Pancreas (tissue), 10 donors: ENCODE measurements at regions of chr12 and their contacts with region 1.

Region 1: DNA sequence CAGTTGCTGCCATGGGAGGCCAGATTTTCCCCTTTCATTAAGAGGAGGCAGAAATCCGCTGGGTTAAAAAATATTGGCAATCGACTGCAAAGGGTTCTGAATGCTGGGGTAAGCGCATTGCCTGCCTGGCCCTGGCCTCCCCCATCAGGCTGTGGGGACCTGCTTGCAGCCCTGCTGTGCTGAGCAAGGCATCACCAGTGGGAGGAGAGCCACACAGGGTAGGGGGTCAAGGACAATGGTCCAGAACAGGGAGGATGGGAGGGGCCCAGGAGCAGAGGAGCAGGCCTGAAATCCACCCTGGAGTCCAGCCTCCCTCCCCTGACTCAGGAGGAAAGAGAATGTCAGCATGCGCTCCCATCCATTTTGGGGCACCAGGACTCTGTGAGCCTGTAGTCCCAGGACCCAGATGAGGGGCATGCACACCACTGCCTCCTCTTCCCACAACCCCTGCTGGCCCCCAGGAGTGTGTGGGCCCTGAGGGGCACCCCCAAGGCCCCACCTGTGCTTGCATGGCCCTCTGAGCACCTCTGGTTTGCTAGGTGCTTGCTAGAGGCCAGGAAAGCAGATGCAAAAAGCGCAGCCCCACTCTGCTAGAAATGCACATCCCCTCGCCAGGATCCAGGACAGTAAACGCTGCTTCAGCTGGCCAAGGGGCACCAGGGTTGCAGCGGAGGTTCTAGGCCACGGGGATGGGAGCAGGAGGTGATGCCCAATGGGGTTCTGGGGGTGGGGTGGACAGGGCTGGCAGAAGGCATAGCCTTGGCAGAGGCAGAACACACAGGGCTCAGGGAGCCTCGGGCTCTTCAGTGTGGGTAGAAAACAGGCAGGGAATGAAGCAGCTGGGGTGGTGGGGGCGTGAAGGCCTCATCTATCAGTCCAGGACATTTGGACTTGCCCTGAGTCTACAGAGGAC is 14.6 kb downstream of the TESC start:
- DNase-seq: peak in 1 of 6 donors; percentile 56
- ATAC-seq: peak in 3 of 4 donors; percentile 9 to 20 (median 15)
- H3K4me3 ChIP-seq: no peak overlapping the region
- H3K27ac ChIP-seq: peak overlapping the region in 2 of 4 donors; percentile 39 to 47
- H3K4me1 ChIP-seq: peaks cover 32 to 46% (median 45%) of the 10 kb centered on the region in 3 donors
- H3K27me3 ChIP-seq: no peaks in the 10 kb centered on the region
- CTCF ChIP-seq: no peak

Region 2: DNA sequence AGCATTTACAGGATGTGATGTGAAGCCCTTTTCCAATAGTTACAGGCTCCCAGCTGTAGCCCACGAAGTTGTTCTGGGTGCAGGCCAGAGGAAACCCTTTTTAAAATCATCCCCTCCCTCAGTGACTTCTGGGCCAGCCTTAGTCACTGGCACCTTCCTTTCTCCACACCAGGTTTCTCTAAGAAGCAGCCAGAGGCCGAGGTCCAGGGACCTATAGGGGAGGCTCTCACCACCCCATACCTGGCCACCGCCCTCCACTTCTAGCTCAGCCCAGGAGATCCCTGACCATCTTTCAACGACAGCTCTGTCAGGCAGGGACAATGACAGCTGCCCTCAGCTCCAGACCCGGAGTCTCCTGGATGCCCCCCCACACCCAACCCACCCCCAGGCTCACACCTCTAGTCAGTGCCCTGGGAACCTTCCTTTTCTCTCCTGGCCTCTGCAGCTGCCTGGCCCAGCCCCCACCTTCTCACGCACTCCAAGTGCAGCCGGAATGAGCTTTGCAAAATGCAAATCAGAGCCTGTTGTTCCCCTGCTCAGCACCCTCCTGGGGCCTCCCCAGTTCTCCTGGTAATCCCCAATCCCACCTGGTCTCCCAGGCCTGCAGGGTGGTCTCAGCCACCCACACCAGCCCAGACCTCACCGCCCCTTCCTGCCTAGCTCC is 32.1 kb before region 1 on chr12:
- intact Hi-C with region 1: loop called in 1 of 3 experiments (anchors 5 kb)
- DNase-seq: no peak
- ATAC-seq: no peak
- H3K4me3 ChIP-seq: no peak overlapping the region
- H3K27ac ChIP-seq: no peak overlapping the region
- H3K4me1 ChIP-seq: peaks cover 8 to 23% (median 13%) of the 10 kb centered on the region in 3 donors
- H3K27me3 ChIP-seq: no peaks in the 10 kb centered on the region
- CTCF ChIP-seq: no peak

Region 3: DNA sequence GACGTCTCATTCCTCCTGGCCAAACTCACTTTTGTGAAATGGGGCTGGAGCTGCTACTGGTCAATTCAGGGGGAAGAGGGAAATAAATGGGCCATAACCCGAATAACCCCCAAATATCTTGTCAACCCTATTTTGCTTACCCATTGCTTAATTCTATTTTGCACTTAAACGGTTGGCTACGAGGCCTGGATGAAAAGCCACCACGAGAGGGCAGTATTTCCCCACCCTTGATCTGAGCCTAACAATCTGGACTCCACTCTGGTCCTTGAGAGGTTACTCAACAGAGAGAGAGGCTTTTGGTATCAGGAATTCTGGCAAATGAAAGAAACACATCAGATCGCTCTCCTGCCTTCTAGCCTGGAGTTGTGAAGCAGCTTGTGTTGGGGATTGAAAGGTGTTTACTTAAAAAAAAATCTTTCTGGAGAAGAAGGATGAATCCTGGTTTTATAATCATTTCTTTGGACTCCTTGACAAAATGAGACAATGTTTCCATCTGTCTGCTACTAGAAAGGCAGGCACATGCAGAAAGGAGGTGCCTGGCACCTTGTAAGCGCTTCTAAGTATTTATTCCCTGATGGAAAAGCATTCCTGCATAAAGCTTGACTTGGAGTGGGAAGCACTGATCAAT is 128.0 kb after region 1 on chr12:
- intact Hi-C with region 1: no loop called
- DNase-seq: peak in 5 of 6 donors; percentile 45 to 80 (median 66)
- ATAC-seq: peak; percentile 74 to 95 (median 93)
- H3K4me3 ChIP-seq: no peak overlapping the region
- H3K27ac ChIP-seq: no peak overlapping the region
- H3K4me1 ChIP-seq: no peaks in the 10 kb centered on the region
- H3K27me3 ChIP-seq: no peaks in the 10 kb centered on the region
- CTCF ChIP-seq: peak; percentile 80 to 88 (median 83)